ENCODE measurements at regions of chr7 and their contacts with region 1.

Region 1: DNA sequence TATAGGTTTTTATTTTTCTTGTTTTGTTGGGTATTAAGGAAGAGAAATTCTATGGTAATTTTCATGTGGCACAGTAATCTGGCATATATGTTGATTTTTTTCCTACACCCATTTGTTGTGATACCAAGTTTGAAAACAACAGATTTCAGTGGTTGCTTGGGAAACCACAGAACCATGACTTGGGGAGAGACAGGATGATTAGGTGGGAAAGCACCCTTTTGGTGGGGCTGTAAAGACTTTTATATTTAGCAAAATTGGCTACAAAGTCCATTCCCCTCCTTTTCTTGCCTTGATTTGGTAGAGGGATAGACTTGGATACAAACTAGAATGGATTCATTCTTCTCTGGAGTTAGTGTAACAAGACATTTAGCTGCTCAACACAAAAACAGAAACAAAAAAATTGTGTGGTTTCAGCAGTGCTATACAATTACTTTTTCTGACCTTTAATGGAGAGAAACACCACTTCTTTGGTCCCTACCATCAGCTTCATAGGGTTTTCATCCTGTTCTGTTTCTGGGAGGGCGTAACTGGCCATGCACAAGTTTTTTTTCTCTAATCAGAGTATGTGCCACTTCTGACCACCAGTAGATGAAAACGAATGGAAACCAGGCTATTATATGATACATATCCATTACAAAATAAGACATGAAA is 52.7 kb downstream of the FIGNL1 start:
- DNase-seq: peak in 3 of 9 experiments; percentile 33 to 84 (median 69)
- ATAC-seq: peak; percentile 19
- H3K4me3 ChIP-seq: no peak overlapping the region
- H3K4me3 Mint-ChIP-seq: peak overlapping the region; percentile 13
- H3K27ac ChIP-seq: peak overlapping the region in 1 of 2 experiments; percentile 80
- H3K27ac Mint-ChIP-seq: peak overlapping the region; percentile 95
- H3K4me1 ChIP-seq: peaks cover 64% of the 10 kb centered on the region
- H3K4me1 Mint-ChIP-seq: peaks cover 76% of the 10 kb centered on the region
- H3K27me3 ChIP-seq: no peaks in the 10 kb centered on the region
- H3K27me3 Mint-ChIP-seq: no peaks in the 10 kb centered on the region
- CTCF ChIP-seq: no peak

Region 2: DNA sequence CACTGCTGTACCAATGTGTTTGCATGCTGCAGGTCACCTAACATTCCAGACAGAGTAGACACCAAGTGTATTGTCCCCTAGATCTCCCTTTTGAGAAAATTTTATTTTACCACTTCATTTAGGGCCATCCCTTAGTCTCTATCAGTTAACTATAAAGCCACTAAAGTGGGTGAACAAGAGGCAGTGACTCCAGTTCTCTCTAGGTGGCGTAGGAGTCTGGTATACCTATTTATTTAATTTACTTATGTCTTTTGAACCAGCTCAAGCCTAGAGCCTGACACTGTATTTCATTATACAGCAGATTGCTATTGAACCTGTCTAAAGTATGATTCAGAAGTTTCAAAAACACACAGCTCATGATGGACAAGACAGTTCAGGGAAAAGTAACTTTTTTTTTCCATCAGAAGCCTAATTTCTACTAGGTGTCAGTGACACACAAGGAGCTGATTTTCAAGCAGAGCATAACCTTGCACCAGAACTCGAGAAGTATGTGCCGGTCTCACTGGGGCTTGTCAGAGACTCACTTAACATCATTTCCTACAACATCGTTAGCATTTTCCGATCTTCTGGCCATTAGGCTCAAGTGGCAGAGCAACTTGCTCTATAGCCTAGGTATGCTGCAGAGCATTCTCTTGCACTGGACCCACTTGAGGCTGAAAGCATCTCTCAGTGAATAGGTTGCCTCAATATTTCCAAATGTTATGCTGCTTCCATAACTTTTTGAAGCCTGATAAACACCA is 1297.7 kb before region 1 on chr7:
- CTCF ChIA-PET with region 1: no interaction called
- POLR2A ChIA-PET with region 1: no interaction called
- intact Hi-C with region 1: no loop called
- DNase-seq: no peak
- ATAC-seq: no peak
- H3K4me3 ChIP-seq: no peak overlapping the region
- H3K4me3 Mint-ChIP-seq: no peak overlapping the region
- H3K27ac ChIP-seq: no peak overlapping the region
- H3K27ac Mint-ChIP-seq: no peak overlapping the region
- H3K4me1 ChIP-seq: no peaks in the 10 kb centered on the region
- H3K4me1 Mint-ChIP-seq: no peaks in the 10 kb centered on the region
- H3K27me3 ChIP-seq: no peaks in the 10 kb centered on the region
- H3K27me3 Mint-ChIP-seq: no peaks in the 10 kb centered on the region
- CTCF ChIP-seq: no peak

Region 3: DNA sequence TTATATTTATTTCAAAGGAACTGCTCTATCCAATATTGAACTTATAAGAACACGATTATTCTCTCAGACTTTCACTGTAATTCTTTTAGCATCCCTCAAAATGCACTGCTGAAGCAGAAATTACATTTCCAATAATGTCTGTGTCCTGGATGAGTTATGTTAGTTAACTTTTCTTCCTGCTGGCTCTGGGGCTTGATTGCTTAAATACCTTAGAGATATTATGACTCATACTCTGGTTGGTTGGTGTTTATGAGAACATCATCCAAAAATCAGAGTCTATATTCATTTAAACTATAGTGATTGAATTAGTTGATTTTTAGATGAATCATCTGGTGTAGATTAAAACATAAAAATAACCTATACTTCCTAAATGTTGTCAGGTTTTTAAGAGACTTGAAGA is 870.3 kb before region 1 on chr7:
- CTCF ChIA-PET with region 1: no interaction called
- POLR2A ChIA-PET with region 1: no interaction called
- intact Hi-C with region 1: no loop called
- DNase-seq: no peak
- ATAC-seq: no peak
- H3K4me3 ChIP-seq: no peak overlapping the region
- H3K4me3 Mint-ChIP-seq: no peak overlapping the region
- H3K27ac ChIP-seq: no peak overlapping the region
- H3K27ac Mint-ChIP-seq: no peak overlapping the region
- H3K4me1 ChIP-seq: no peaks in the 10 kb centered on the region
- H3K4me1 Mint-ChIP-seq: no peaks in the 10 kb centered on the region
- H3K27me3 ChIP-seq: no peaks in the 10 kb centered on the region
- H3K27me3 Mint-ChIP-seq: no peaks in the 10 kb centered on the region
- CTCF ChIP-seq: no peak

Region 4: DNA sequence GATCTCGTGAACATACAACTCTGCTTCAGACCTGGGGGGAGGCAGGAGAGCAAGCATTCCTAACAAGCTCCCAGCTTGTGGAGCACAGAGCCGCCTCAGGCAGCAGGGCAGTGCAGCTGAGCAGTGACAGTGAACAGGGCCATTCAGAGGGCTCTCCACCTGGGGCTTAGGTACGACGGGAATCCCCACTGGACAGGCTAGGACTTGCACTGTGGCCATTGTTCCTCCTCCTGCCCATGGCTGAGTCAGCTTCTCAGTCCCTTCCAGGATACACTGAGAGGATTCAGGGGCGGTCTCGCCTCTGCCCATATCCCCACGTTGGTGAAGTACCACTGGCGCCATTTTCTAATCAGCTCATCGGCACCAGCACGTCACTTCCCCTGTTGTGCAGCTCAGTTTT is 18.4 kb before region 1 on chr7:
- CTCF ChIA-PET with region 1: no interaction called
- POLR2A ChIA-PET with region 1: interaction called, 8 read pairs
- intact Hi-C with region 1: loop called in 1 of 2 experiments (anchors 2 kb)
- DNase-seq: no peak
- ATAC-seq: peak; percentile 25
- H3K4me3 ChIP-seq: no peak overlapping the region
- H3K4me3 Mint-ChIP-seq: peak overlapping the region; percentile 26
- H3K27ac ChIP-seq: peak overlapping the region in 1 of 2 experiments; percentile 24
- H3K27ac Mint-ChIP-seq: peak overlapping the region; percentile 86
- H3K4me1 ChIP-seq: peaks cover 79% of the 10 kb centered on the region
- H3K4me1 Mint-ChIP-seq: peaks cover 92% of the 10 kb centered on the region
- H3K27me3 ChIP-seq: no peaks in the 10 kb centered on the region
- H3K27me3 Mint-ChIP-seq: no peaks in the 10 kb centered on the region
- CTCF ChIP-seq: no peak

Region 5: GRCh38 chr7:50409856-50410745 is 12.7 kb after region 1 on chr7:
- CTCF ChIA-PET with region 1: interaction called, 38 read pairs
- POLR2A ChIA-PET with region 1: interaction called, 6 read pairs
- intact Hi-C with region 1: loop called (anchors 1 to 2 kb)
- DNase-seq: peak in 1 of 9 experiments; percentile 42
- ATAC-seq: peak; percentile 53
- H3K4me3 ChIP-seq: peak overlapping the region in 1 of 2 experiments; percentile 16
- H3K4me3 Mint-ChIP-seq: peak overlapping the region; percentile 65
- H3K27ac ChIP-seq: no peak overlapping the region
- H3K27ac Mint-ChIP-seq: peak overlapping the region; percentile 83
- H3K4me1 ChIP-seq: peaks cover 30% of the 10 kb centered on the region
- H3K4me1 Mint-ChIP-seq: peaks cover 65% of the 10 kb centered on the region
- H3K27me3 ChIP-seq: no peaks in the 10 kb centered on the region
- H3K27me3 Mint-ChIP-seq: no peaks in the 10 kb centered on the region
- CTCF ChIP-seq: no peak

Region 6: GRCh38 chr7:50426280-50427045 is 29.0 kb after region 1 on chr7:
- CTCF ChIA-PET with region 1: no interaction called
- POLR2A ChIA-PET with region 1: no interaction called
- intact Hi-C with region 1: no loop called
- DNase-seq: no peak
- ATAC-seq: no peak
- H3K4me3 ChIP-seq: no peak overlapping the region
- H3K4me3 Mint-ChIP-seq: no peak overlapping the region
- H3K27ac ChIP-seq: no peak overlapping the region
- H3K27ac Mint-ChIP-seq: no peak overlapping the region
- H3K4me1 ChIP-seq: no peaks in the 10 kb centered on the region
- H3K4me1 Mint-ChIP-seq: no peaks in the 10 kb centered on the region
- H3K27me3 ChIP-seq: no peaks in the 10 kb centered on the region
- H3K27me3 Mint-ChIP-seq: no peaks in the 10 kb centered on the region
- CTCF ChIP-seq: no peak

Measured in CD8-positive, alpha-beta T cell (primary cell).